Gastrocnemius medialis (tissue), 4 donors: ENCODE measurements at regions of chr2 and their contacts with region 1.

Region 1: DNA sequence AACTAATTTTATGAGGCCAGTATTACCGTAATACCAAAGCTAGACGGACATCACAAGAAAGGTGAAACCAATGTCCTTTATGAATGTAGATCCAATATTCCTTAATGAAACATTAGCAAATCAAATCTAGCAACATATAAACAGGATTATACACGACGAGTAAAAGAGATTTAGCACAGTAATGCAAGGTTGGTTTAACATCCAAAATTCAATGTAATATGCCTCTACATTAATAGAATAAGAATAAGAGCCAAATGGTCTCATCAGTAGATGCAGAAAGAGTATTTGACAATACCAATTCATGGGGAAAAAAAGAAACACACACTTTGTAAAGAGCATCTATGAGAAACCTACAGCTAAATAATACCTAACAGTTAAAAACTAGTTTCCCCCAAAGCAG is 99.5 kb downstream of the TMEM163 start:
- DNase-seq: no peak
- ATAC-seq: no peak
- H3K4me3 ChIP-seq: no peak overlapping the region
- H3K27ac ChIP-seq: no peak overlapping the region
- H3K4me1 ChIP-seq: no peaks in the 10 kb centered on the region
- H3K27me3 ChIP-seq: no peaks in the 10 kb centered on the region
- CTCF ChIP-seq: no peak
- POLR2A ChIP-seq: no peak

Region 2: DNA sequence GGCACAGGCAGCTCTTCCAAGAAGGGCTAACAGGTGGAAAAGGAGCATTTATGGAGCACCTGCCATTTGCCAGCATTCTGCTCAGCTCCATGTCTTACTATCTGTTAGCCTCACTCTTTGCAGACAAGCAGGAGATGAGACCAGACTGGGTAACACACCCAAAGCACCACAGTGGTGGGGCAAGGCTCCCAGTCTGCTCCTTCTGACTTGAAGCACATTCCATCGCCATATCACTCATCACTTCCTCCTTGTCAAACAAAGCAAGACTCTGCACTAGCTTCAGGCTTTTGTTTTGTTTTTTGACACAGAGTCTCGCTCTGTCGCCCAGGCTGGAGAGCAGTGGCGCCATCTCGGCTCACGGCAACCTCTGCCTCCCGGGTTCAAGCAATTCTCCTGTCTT is 182.5 kb before region 1 on chr2:
- in situ Hi-C with region 1: no loop called
- intact Hi-C with region 1: no loop called
- DNase-seq: no peak
- ATAC-seq: no peak
- H3K4me3 ChIP-seq: no peak overlapping the region
- H3K27ac ChIP-seq: no peak overlapping the region
- H3K4me1 ChIP-seq: no peaks in the 10 kb centered on the region
- H3K27me3 ChIP-seq: no peaks in the 10 kb centered on the region
- CTCF ChIP-seq: no peak
- POLR2A ChIP-seq: no peak

Region 3: GRCh38 chr2:134668821-134669220 is 49.6 kb after region 1 on chr2:
- in situ Hi-C with region 1: no loop called
- intact Hi-C with region 1: loop called (anchors 5 kb)
- DNase-seq: no peak
- ATAC-seq: no peak
- H3K4me3 ChIP-seq: no peak overlapping the region
- H3K27ac ChIP-seq: no peak overlapping the region
- H3K4me1 ChIP-seq: no peaks in the 10 kb centered on the region
- H3K27me3 ChIP-seq: no peaks in the 10 kb centered on the region
- CTCF ChIP-seq: no peak
- POLR2A ChIP-seq: no peak